Posterior cingulate gyrus (tissue), 11 donors: ENCODE measurements at regions of chr10 and their contacts with region 1.

Region 1: GRCh38 chr10:118241229-118242137 is 100.6 kb downstream of the FAM204A start:
- DNase-seq: peak; percentile 75 to 97 (median 87)

Region 2: DNA sequence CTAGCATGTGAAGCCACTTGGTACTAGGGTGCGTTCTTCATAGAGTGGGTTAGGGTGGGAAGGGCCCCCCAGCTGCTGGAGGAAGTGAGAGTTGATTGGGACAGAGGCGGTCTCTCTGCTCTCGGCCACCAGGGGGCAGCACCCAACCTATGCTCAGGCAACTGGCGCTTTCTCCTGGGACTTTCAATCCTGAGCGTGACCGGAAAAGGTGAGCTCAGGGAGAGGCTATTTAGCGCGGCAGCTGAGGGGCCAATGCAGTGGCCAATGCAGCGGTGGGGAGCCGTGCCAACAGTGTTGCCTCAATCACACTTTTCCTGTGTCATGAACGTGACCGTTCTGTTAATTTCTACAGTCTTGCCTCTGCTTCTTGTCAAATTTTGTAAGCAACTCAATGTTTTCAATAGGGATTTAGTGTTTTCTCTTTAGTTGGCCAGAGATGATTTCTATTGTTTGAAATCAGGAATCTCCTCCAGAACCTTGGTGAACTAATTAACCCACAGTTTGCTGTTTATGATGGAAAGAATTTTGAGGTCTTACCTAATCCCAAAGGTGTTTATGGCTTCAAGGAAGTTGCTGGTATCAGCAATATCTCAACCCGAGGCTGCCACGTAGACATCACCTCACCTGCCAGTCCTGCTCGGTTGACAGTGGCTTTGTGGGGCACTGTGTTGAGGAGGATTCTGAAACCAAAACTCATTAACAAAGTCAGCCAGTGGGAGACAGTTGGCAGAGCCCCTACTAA is 798.4 kb before region 1 on chr10:
- intact Hi-C with region 1: loop called (anchors 5 kb)
- DNase-seq: peak; percentile 55 to 93 (median 81)

Region 3: DNA sequence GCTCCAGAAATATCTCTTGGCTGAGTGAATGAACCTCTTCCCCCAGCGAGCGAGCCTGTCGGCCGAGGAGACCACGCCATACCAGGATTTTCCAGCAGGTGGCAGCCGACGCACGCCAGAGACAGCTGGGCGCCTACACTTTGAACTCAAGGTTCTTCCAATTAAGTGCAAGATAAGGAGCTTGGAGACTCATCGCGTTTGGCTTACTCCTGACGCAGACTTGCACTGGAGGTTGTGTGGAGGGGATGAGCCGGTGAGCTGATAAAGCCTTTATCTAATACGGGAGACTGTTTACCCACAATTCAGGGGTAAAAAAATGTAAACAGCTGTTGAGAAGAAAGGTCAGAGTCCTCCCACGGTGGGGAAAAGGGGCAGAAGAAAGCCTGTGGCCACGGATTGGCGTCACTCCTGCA is 744.9 kb before region 1 on chr10:
- intact Hi-C with region 1: loop called (anchors 1 kb)
- DNase-seq: peak; percentile 54 to 96 (median 76)

Region 4: DNA sequence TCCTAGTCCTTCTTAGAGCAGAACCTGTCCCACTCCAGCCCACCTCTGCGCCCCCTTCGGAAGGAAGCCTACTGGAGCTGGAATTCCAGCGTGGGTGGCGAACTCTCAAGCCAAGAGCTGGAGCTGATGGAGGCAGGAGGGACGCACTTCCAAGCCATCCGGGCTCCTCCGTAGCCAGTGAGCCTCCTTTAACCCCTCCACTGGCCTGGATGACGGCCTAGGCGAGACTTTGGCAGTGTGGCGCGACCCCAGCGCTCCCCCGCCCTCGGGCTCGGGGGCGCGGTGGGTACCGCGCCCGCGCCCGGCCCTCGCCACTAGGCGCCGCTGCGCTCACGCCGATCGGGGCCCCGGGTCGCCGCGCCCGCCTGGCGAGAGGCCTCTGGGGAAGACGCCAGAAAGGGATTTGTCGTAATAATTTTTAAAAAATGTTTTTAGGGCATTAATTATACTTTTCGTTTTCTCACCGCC is 704.0 kb before region 1 on chr10:
- intact Hi-C with region 1: loop called (anchors 1 kb)
- DNase-seq: peak in 1 of 10 donors; percentile 54